Pancreas (tissue), 10 donors: ENCODE measurements at regions of chr20 and their contacts with region 1.

Region 1: GRCh38 chr20:17682103-17682888 is at the start of gene RRBP1:
- DNase-seq: peak; percentile 98 to 100 (median 99)
- ATAC-seq: peak; percentile 76 to 89 (median 83)
- H3K4me3 ChIP-seq: peak within 1 kb of the TSS; percentile 65 to 87 (median 84)
- H3K27ac ChIP-seq: peak within 1 kb of the TSS; percentile 95 to 97 (median 96)
- H3K4me1 ChIP-seq: peaks cover 21 to 41% (median 34%) of the 10 kb centered on the region in 3 donors
- H3K27me3 ChIP-seq: no peaks in the 10 kb centered on the region
- CTCF ChIP-seq: peak; percentile 15 to 57 (median 28)
- total RNA-seq, gene RRBP1: 339 to 442 (median 354) TPM

Region 2: DNA sequence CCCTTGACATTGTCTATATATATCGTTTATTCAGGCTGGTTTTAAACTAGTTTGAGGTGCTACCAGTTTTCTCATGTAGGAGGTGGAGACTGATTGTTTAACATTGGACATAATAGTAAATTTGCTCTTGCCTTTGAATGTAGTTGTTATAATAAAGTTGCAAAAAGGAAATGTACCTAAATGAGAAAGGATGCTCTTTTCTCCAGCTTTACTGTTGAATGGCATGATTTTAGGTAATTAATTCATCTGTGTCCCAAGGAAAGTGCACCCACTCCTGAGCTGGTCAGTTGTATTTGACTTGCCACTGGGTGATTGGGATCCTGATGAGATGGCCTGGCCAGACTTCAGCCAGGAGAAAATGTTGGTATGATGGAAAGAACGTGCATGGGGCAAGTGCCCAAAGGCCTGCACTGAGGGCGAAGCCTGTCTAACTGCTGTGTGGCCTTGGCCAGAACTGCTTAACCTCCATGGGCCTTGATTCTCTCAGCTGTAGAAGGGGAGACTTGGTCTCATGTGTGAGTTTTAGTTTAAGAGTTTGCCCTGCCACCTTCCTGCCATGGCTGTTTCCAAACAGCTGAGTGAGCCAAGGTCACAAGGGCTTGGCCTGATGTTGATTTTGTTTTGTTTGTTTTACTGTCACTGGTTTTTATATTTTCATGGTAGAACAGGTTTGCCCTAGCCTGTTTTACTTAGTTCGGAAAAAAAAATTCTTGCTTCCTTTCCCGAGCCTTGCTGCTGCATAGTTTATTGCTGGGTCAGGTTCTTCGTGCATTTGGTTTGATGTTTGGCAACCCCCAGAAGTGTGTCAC is 77.2 kb before region 1 on chr20:
- intact Hi-C with region 1: no loop called
- DNase-seq: peak in 4 of 6 donors; percentile 51 to 78 (median 73)
- ATAC-seq: peak; percentile 79 to 89 (median 84)
- H3K4me3 ChIP-seq: no peak overlapping the region
- H3K27ac ChIP-seq: peak overlapping the region in 2 of 4 donors; percentile 52 to 57
- H3K4me1 ChIP-seq: peaks cover 45 to 53% (median 51%) of the 10 kb centered on the region in 3 donors
- H3K27me3 ChIP-seq: no peaks in the 10 kb centered on the region
- CTCF ChIP-seq: no peak

Region 3: GRCh38 chr20:17806739-17807441 is 124.6 kb after region 1 on chr20:
- intact Hi-C with region 1: no loop called
- DNase-seq: peak; percentile 91 to 98 (median 94)
- ATAC-seq: peak; percentile 87 to 91 (median 90)
- H3K4me3 ChIP-seq: peak overlapping the region in 1 of 4 donors; percentile 7
- H3K27ac ChIP-seq: peak overlapping the region; percentile 87 to 96 (median 96)
- H3K4me1 ChIP-seq: peaks cover 19 to 38% (median 26%) of the 10 kb centered on the region in 3 donors
- H3K27me3 ChIP-seq: no peaks in the 10 kb centered on the region
- CTCF ChIP-seq: no peak

Region 4: GRCh38 chr20:17822039-17822438 is 139.7 kb after region 1 on chr20:
- intact Hi-C with region 1: no loop called
- DNase-seq: peak in 3 of 6 donors; percentile 75 to 83 (median 81)
- ATAC-seq: peak; percentile 90 to 94 (median 94)
- H3K4me3 ChIP-seq: no peak overlapping the region
- H3K27ac ChIP-seq: peak overlapping the region; percentile 53 to 73 (median 63)
- H3K4me1 ChIP-seq: peaks cover 14 to 25% (median 25%) of the 10 kb centered on the region in 3 donors
- H3K27me3 ChIP-seq: no peaks in the 10 kb centered on the region
- CTCF ChIP-seq: no peak

Region 5: GRCh38 chr20:17885544-17885943 is 203.2 kb after region 1 on chr20:
- intact Hi-C with region 1: loop called in 1 of 3 experiments (anchors 10 kb)
- DNase-seq: no peak
- ATAC-seq: peak in 2 of 4 donors; percentile 43 to 52
- H3K4me3 ChIP-seq: no peak overlapping the region
- H3K27ac ChIP-seq: no peak overlapping the region
- H3K4me1 ChIP-seq: no peaks in the 10 kb centered on the region
- H3K27me3 ChIP-seq: no peaks in the 10 kb centered on the region
- CTCF ChIP-seq: no peak